CD8-positive, alpha-beta T cell (primary cell): ENCODE measurements at regions of chr4 and their contacts with region 1.

Region 1: DNA sequence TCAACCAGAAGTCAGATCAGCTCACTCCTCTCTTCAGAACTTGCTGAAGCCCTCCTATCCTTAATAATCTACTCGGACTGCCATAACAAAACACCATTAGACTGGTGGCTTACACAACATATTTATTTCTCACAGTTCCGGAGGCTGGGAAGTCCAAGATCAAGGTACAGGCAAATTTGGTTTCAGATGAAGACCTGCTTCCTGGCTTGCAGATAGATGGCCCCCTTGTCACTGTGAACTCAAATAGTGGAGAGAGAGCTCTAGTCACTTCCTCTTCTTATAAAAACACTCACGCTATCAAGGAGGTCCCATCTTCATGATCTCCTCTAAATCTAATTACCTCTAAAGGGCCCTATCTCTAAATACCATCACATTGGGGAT is 125.1 kb downstream of the CAMK2D start:
- DNase-seq: peak in 6 of 9 experiments; percentile 6 to 71 (median 46)
- ATAC-seq: peak; percentile 78
- H3K4me3 ChIP-seq: no peak overlapping the region
- H3K4me3 Mint-ChIP-seq: peak overlapping the region; percentile 30
- H3K27ac ChIP-seq: peak overlapping the region; percentile 17 to 63
- H3K27ac Mint-ChIP-seq: peak overlapping the region; percentile 90
- H3K4me1 ChIP-seq: peaks cover 39% of the 10 kb centered on the region
- H3K4me1 Mint-ChIP-seq: peaks cover 56% of the 10 kb centered on the region
- H3K27me3 ChIP-seq: no peaks in the 10 kb centered on the region
- H3K27me3 Mint-ChIP-seq: no peaks in the 10 kb centered on the region
- CTCF ChIP-seq: peak; percentile 32

Region 2: DNA sequence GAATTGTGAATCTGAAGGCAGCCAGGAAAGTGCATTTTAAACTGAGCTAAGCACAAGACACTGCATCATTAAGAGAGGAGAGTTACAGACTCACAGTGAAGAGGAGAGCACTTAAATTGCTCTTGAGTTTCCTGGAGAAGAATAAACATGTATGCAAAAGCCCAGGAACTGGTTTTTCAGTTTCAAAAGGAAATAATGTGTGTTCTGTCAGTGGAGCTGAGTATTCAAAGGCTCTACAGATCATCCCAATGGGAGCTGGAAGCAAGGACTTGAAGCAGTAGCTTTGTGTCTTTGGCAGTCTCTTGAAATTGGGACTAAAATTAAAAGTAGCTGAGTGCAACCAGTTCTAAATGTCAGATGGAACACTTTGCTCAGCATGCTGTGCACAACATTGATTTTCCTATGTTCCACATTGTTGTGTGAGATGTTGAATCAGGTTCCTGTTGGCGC is 734.4 kb before region 1 on chr4:
- CTCF ChIA-PET with region 1: no interaction called
- POLR2A ChIA-PET with region 1: no interaction called
- intact Hi-C with region 1: no loop called
- DNase-seq: no peak
- ATAC-seq: no peak
- H3K4me3 ChIP-seq: no peak overlapping the region
- H3K4me3 Mint-ChIP-seq: no peak overlapping the region
- H3K27ac ChIP-seq: no peak overlapping the region
- H3K27ac Mint-ChIP-seq: no peak overlapping the region
- H3K4me1 ChIP-seq: no peaks in the 10 kb centered on the region
- H3K4me1 Mint-ChIP-seq: no peaks in the 10 kb centered on the region
- H3K27me3 ChIP-seq: no peaks in the 10 kb centered on the region
- H3K27me3 Mint-ChIP-seq: peaks cover 13% of the 10 kb centered on the region
- CTCF ChIP-seq: no peak

Region 3: DNA sequence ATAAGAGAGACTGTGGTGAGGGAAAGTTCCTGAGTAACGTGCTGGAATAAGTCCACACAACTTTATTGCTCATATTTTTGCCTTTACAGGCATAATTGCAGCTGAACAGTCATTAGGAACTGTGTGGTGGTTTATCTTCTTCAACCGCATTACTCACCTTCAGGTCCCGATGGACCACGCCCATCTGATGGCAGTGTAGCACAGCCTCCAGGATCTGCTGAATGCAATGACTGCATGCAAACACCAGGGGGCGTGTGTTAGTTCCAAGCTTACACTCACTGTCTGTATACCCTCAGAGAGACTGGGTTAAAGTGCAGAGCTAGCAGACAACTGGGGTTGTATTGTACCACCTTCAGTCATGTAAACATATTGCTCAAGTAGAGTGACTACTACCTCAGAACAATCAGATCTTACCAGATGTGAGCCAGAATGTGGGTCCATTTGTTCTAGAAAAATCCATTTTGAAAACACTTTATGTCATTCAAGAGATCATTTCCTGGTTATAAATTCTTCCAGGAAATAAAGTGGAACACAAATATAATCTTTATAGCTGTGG is 88.9 kb before region 1 on chr4:
- CTCF ChIA-PET with region 1: interaction called, 6 read pairs
- POLR2A ChIA-PET with region 1: interaction called, 3 read pairs
- intact Hi-C with region 1: loop called (anchors 2 to 10 kb)
- DNase-seq: peak; percentile 73 to 95 (median 87)
- ATAC-seq: peak; percentile 100
- H3K4me3 ChIP-seq: no peak overlapping the region
- H3K4me3 Mint-ChIP-seq: no peak overlapping the region
- H3K27ac ChIP-seq: no peak overlapping the region
- H3K27ac Mint-ChIP-seq: peak overlapping the region; percentile 70
- H3K4me1 ChIP-seq: peaks cover 11% of the 10 kb centered on the region
- H3K4me1 Mint-ChIP-seq: peaks cover 12% of the 10 kb centered on the region
- H3K27me3 ChIP-seq: no peaks in the 10 kb centered on the region
- H3K27me3 Mint-ChIP-seq: no peaks in the 10 kb centered on the region
- CTCF ChIP-seq: peak; percentile 94

Region 4: DNA sequence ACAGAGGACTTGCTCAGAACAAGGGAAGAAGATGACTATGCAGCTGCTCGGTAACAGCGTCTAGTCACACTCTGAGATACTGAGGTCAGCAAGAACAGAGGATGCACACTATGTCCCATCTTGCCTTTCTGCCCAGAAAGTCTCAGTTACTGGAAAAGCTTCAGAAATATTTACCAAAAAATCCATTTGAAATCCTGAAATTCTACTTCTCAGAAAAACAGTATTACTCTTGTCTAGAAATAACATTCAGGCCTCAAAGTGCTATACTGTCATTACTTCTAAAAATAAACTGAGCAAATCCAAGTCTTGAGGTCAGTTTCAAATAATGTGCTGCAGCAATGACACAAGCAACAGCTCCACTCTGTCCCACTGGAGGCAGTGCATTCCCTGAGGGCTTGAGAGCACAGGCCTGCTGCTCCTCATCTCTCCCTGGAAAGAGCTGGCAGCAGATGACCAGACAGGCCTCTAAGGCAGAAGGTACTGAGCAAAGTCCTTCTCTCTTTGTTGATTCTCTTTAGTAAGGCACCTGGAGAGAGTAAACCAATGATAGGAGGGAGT is 48.2 kb after region 1 on chr4:
- CTCF ChIA-PET with region 1: interaction called, 4 read pairs
- POLR2A ChIA-PET with region 1: no interaction called
- intact Hi-C with region 1: loop called in 1 of 2 experiments (anchors 5 kb)
- DNase-seq: peak in 2 of 9 experiments; percentile 8 to 17
- ATAC-seq: no peak
- H3K4me3 ChIP-seq: no peak overlapping the region
- H3K4me3 Mint-ChIP-seq: no peak overlapping the region
- H3K27ac ChIP-seq: peak overlapping the region in 1 of 2 experiments; percentile 7
- H3K27ac Mint-ChIP-seq: peak overlapping the region; percentile 87
- H3K4me1 ChIP-seq: peaks cover 37% of the 10 kb centered on the region
- H3K4me1 Mint-ChIP-seq: peaks cover 53% of the 10 kb centered on the region
- H3K27me3 ChIP-seq: no peaks in the 10 kb centered on the region
- H3K27me3 Mint-ChIP-seq: no peaks in the 10 kb centered on the region
- CTCF ChIP-seq: no peak

Region 5: GRCh38 chr4:113781439-113782040 is 145.1 kb after region 1 on chr4:
- CTCF ChIA-PET with region 1: interaction called, 4 read pairs
- POLR2A ChIA-PET with region 1: no interaction called
- intact Hi-C with region 1: loop called in 1 of 2 experiments (anchors 5 kb)
- DNase-seq: peak in 2 of 9 experiments; percentile 48 to 61
- ATAC-seq: no peak
- H3K4me3 ChIP-seq: no peak overlapping the region
- H3K4me3 Mint-ChIP-seq: no peak overlapping the region
- H3K27ac ChIP-seq: no peak overlapping the region
- H3K27ac Mint-ChIP-seq: no peak overlapping the region
- H3K4me1 ChIP-seq: no peaks in the 10 kb centered on the region
- H3K4me1 Mint-ChIP-seq: peaks cover 4% of the 10 kb centered on the region
- H3K27me3 ChIP-seq: no peaks in the 10 kb centered on the region
- H3K27me3 Mint-ChIP-seq: no peaks in the 10 kb centered on the region
- CTCF ChIP-seq: peak; percentile 72

Region 6: GRCh38 chr4:113908829-113909228 is 272.4 kb after region 1 on chr4:
- CTCF ChIA-PET with region 1: interaction called, 3 read pairs
- POLR2A ChIA-PET with region 1: no interaction called
- intact Hi-C with region 1: loop called in 1 of 2 experiments (anchors 5 kb)
- DNase-seq: peak in 2 of 9 experiments; percentile 29 to 47
- ATAC-seq: no peak
- H3K4me3 ChIP-seq: no peak overlapping the region
- H3K4me3 Mint-ChIP-seq: no peak overlapping the region
- H3K27ac ChIP-seq: no peak overlapping the region
- H3K27ac Mint-ChIP-seq: peak overlapping the region; percentile 2
- H3K4me1 ChIP-seq: peaks cover 26% of the 10 kb centered on the region
- H3K4me1 Mint-ChIP-seq: peaks cover 32% of the 10 kb centered on the region
- H3K27me3 ChIP-seq: no peaks in the 10 kb centered on the region
- H3K27me3 Mint-ChIP-seq: no peaks in the 10 kb centered on the region
- CTCF ChIP-seq: no peak

Region 7: GRCh38 chr4:113952452-113953029 is 316.1 kb after region 1 on chr4:
- CTCF ChIA-PET with region 1: no interaction called
- POLR2A ChIA-PET with region 1: no interaction called
- intact Hi-C with region 1: no loop called
- DNase-seq: peak in 2 of 9 experiments; percentile 48 to 57
- ATAC-seq: peak; percentile 71
- H3K4me3 ChIP-seq: no peak overlapping the region
- H3K4me3 Mint-ChIP-seq: no peak overlapping the region
- H3K27ac ChIP-seq: no peak overlapping the region
- H3K27ac Mint-ChIP-seq: no peak overlapping the region
- H3K4me1 ChIP-seq: no peaks in the 10 kb centered on the region
- H3K4me1 Mint-ChIP-seq: peaks cover 8% of the 10 kb centered on the region
- H3K27me3 ChIP-seq: no peaks in the 10 kb centered on the region
- H3K27me3 Mint-ChIP-seq: peaks cover 4% of the 10 kb centered on the region
- CTCF ChIP-seq: peak; percentile 78

Region 8: DNA sequence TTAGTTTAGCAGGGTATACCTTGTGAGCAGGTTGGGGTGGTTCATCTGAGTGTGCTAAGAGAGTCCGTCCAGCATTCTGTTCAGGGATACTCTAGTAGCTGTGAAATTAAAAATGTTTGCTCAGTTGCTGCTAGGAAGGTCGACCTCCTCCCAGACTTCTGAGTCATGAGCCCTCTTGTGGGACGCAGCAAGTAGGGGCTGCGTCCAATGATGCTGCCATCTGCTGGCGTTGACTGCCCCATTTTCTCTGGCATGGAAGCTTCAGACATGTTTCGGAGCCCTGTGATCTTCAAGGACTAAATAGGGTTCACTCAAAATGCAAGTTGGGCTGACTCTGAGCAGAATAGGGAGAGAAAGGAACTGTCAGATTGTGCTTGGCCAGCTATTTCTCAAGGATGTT is 544.1 kb after region 1 on chr4:
- CTCF ChIA-PET with region 1: no interaction called
- POLR2A ChIA-PET with region 1: no interaction called
- intact Hi-C with region 1: loop called in 1 of 2 experiments (anchors 2 kb)
- DNase-seq: peak in 8 of 9 experiments; percentile 9 to 63 (median 46)
- ATAC-seq: peak; percentile 29
- H3K4me3 ChIP-seq: no peak overlapping the region
- H3K4me3 Mint-ChIP-seq: no peak overlapping the region
- H3K27ac ChIP-seq: no peak overlapping the region
- H3K27ac Mint-ChIP-seq: no peak overlapping the region
- H3K4me1 ChIP-seq: no peaks in the 10 kb centered on the region
- H3K4me1 Mint-ChIP-seq: no peaks in the 10 kb centered on the region
- H3K27me3 ChIP-seq: no peaks in the 10 kb centered on the region
- H3K27me3 Mint-ChIP-seq: no peaks in the 10 kb centered on the region
- CTCF ChIP-seq: no peak